MCF 10A (cell line): ENCODE measurements at regions of chr6 and their contacts with region 1.

Region 1: DNA sequence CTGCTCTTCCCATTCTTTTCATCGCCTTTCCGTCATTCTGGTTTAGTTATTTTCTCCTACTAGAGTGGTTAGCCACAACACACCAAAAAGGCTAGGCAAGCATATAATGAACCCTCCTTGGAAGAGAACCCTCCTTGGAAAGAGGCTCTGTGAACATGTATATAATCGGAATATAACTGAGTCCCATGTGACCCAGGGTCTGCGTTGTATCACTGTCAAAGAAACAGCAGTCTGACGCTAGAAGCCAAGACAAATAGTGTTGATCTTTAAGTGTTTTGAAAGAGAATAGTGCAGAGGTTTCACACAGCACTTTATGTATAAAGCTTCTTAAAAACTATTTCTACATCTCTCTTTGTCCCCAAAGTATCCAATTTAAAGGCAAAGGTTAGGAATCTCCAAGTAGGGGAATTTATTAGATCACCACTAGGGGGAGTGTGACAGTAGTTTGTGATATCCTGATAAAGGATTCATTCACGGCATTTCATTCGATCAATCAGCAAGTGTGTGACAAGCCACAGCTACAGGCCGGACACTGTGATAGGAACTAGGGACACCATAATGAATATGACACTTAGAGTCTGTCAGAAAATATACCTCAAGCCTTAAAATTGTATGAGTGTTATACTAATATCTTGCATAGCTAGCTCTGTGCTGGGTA is 395.3 kb downstream of the CD109 start:
- DNase-seq: peak; percentile 68
- H3K4me3 Mint-ChIP-seq: no peak overlapping the region
- H3K27ac Mint-ChIP-seq: no peak overlapping the region
- H3K4me1 Mint-ChIP-seq: no peaks in the 10 kb centered on the region
- H3K27me3 Mint-ChIP-seq: no peaks in the 10 kb centered on the region
- CTCF ChIP-seq: peak; percentile 62

Region 2: DNA sequence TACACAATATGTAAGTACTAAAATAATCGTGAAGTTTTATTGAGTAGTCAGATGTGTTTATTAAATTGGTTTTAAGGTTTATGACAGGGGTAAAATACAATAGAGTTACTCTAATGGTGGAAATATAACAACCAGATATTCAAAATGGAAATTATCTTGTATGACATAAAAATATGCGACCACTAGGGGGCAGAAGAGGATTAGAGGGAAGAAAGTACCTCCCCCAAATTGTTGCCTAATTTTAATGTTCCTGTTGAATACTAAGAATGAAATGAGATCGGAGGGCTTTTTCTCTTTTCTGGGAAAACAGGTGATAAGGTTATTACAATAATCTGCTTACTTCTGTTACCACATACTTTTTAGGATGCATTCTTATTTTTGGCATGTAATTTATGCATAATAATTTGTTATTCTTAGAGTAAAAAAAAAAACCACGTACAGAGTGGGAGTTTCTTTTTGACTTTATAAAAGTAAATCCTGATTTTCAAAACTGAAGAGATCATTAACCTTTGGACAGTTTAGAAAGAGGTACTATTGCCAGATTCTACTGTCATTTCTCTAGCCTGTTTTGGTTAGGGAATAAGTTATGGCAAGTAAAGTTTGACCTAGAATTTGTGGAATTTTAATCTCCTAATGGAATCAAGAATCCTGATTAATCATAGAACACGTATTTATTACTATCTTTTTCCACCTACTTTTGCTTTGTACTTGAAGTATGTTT is 236.1 kb before region 1 on chr6:
- CTCF ChIA-PET with region 1: interaction called, 5 read pairs
- POLR2A ChIA-PET with region 1: no interaction called
- intact Hi-C with region 1: loop called (anchors 5 kb)
- DNase-seq: peak; percentile 77
- H3K4me3 Mint-ChIP-seq: no peak overlapping the region
- H3K27ac Mint-ChIP-seq: no peak overlapping the region
- H3K4me1 Mint-ChIP-seq: no peaks in the 10 kb centered on the region
- H3K27me3 Mint-ChIP-seq: no peaks in the 10 kb centered on the region
- CTCF ChIP-seq: peak; percentile 67

Region 3: DNA sequence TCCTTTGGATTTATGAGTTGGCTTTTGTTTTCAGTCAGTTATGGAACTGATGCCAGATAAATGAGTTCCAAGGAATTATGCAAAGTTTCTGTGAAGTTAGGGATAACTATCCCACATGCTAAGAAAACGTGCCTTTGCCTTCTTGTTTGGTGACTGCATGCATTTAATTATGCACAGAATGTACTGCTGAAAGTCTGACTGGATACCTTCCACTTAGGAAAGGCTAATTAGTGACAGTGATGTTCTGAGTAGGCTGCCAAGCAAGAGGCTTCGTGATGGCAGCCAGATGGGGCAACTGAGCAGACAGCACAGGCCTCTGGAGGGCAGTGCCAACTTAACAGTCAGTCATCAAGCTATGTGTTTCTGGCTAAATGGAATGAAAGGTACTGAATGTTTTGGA is 105.4 kb before region 1 on chr6:
- CTCF ChIA-PET with region 1: interaction called, 13 read pairs
- POLR2A ChIA-PET with region 1: no interaction called
- intact Hi-C with region 1: loop called (anchors 10 kb)
- DNase-seq: peak; percentile 58
- H3K4me3 Mint-ChIP-seq: no peak overlapping the region
- H3K27ac Mint-ChIP-seq: no peak overlapping the region
- H3K4me1 Mint-ChIP-seq: no peaks in the 10 kb centered on the region
- H3K27me3 Mint-ChIP-seq: no peaks in the 10 kb centered on the region
- CTCF ChIP-seq: peak; percentile 31

Region 4: DNA sequence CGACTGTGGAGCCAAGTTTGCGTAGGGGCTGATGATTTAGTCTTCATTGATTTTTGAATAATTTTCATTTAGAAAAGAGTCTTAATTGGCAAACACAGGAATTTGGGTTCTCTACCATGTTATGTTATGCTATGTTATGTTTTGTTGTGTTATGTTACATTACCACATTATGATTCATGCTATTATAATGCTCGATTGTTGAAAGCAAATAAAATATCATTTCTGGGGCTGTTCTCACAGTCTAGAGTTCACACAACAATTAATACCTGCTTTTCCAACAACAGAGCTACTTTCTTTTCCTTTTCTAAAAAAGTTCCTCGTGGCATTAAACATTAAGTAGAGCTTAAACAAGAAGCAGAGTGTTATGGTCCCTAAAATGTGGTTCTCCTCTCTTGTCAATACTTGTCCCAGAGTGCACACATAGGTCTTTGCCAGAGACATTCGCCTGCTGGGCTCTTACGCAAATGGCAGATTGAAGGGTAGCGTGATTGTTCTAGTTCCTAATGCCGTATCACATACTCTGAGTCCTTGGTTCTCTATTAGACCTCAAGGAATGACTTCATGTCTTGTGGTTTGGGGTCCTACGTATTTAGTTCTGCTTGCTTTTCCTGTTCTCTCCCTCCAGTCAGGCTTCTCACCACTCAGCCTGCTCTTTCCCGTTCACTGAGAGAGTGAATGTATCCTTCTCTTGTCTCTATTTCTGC is 24.9 kb before region 1 on chr6:
- CTCF ChIA-PET with region 1: interaction called, 10 read pairs
- POLR2A ChIA-PET with region 1: no interaction called
- intact Hi-C with region 1: no loop called
- DNase-seq: peak; percentile 76
- H3K4me3 Mint-ChIP-seq: peak overlapping the region; percentile 17
- H3K27ac Mint-ChIP-seq: peak overlapping the region; percentile 43
- H3K4me1 Mint-ChIP-seq: peaks cover 11% of the 10 kb centered on the region
- H3K27me3 Mint-ChIP-seq: no peaks in the 10 kb centered on the region
- CTCF ChIP-seq: no peak

Region 5: DNA sequence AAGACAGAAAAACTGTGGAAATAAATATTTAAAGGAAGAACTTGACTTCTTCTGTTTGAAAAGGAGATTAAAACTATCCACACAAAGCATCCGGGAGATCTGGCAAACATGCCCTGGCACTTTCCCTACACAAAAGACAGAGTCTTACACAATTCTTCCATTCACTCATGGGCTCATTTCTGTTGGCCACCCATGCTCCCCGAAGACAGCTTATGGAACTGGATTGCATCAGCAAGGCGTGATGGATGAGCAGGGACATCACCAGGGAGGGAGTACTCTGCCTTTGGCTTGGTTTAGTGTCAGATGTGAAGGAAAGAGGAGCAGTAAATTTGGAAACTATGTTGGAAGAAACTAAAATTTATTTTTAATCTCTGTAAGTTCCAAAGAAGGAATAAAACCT is 15.9 kb before region 1 on chr6:
- CTCF ChIA-PET with region 1: interaction called, 45 read pairs
- POLR2A ChIA-PET with region 1: no interaction called
- intact Hi-C with region 1: no loop called
- DNase-seq: peak; percentile 68
- H3K4me3 Mint-ChIP-seq: no peak overlapping the region
- H3K27ac Mint-ChIP-seq: no peak overlapping the region
- H3K4me1 Mint-ChIP-seq: peaks cover 12% of the 10 kb centered on the region
- H3K27me3 Mint-ChIP-seq: no peaks in the 10 kb centered on the region
- CTCF ChIP-seq: no peak

Region 6: DNA sequence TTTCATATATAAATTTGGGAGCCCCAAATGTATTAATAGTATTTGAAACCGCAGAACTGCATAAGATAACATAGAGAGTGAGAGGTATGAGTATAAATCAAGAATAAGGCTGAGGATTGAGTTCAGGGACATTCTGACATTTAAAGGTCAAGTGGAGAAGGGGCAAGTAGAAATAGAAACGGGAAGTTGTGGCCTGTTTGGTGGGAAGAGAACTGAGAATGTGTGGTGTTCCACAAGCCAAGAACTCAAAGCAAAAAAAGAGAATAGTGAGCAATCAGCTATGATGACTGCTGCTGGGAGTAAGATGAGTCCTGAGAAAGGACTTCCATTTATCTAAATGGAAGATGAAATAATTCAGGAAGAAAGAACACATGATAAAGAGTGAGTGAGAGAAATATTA is 23.2 kb after region 1 on chr6:
- CTCF ChIA-PET with region 1: interaction called, 17 read pairs
- POLR2A ChIA-PET with region 1: no interaction called
- intact Hi-C with region 1: no loop called
- DNase-seq: no peak
- H3K4me3 Mint-ChIP-seq: no peak overlapping the region
- H3K27ac Mint-ChIP-seq: no peak overlapping the region
- H3K4me1 Mint-ChIP-seq: peaks cover 19% of the 10 kb centered on the region
- H3K27me3 Mint-ChIP-seq: no peaks in the 10 kb centered on the region
- CTCF ChIP-seq: no peak

Region 7: DNA sequence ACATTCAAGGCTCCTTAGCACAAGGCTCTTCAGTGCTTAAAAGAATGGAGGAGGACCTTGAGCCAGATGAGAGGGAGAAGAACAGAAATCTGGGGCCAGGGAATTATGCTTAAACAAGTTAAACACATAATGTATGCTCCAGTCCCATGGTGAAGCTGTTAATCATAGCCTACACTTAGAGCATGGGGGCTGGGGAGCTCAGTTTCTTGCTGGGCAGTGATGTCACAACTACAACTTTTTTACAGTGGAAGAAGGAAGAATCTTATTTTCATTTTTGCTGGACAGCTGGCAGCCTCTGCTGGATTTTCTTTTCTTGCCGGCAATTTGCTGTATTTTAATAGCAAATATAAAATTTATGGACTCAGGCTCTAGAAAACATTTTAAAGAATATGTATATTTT is 37.3 kb after region 1 on chr6:
- CTCF ChIA-PET with region 1: interaction called, 10 read pairs
- POLR2A ChIA-PET with region 1: no interaction called
- intact Hi-C with region 1: no loop called
- DNase-seq: no peak
- H3K4me3 Mint-ChIP-seq: no peak overlapping the region
- H3K27ac Mint-ChIP-seq: no peak overlapping the region
- H3K4me1 Mint-ChIP-seq: no peaks in the 10 kb centered on the region
- H3K27me3 Mint-ChIP-seq: no peaks in the 10 kb centered on the region
- CTCF ChIP-seq: no peak